GM12878 (cell line): ENCODE measurements at regions of chr3 and their contacts with region 1.

Region 1: DNA sequence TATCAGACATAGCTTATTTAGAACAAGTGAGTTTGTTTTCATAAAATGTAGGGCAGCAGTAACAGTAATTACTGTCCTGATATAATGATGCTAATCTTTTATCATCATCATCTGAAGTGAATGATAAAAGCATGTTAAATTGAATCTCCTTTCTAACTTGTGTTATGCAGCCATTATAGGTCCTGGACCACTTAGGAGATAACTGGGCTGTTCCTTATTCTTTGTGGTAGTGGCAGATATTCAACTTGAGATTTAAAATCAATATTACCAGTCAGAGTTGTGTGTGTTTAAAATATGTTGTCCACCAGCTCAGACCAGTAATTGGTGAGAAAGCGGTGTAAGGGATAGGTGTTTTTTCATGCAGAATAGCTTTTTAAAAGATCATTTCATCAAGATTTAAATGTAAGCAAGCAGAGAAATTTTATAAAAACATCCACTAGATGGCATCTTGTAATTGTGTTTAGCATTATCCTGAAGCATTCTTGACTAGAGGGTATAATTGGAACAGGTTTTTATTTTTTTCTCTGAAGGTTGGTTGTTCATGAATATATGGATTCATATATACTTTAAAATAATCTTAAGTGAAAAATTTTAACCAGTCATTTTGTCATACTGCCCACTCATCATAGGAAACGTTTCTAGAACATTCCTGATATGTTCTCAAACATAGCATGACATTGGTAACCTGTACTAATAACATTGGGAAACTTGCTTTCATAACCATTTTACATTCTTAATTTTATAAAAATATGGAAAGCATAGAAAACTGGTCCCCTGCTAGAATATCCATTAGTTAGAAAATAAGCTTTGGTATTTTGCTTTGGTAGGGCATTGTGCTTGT is 153.9 kb downstream of the BBX start:
- DNase-seq: no peak
- ATAC-seq: peak; percentile 57
- H3K4me3 ChIP-seq: no peak overlapping the region
- H3K27ac ChIP-seq: no peak overlapping the region
- H3K4me1 ChIP-seq: peaks cover 12% of the 10 kb centered on the region
- H3K27me3 ChIP-seq: no peaks in the 10 kb centered on the region
- CTCF ChIP-seq: peak; percentile 24 to 47 (median 39); a peak in 3 of 6 replicates
- EP300 ChIP-seq: no peak
- POLR2A ChIP-seq: no peak
- RAD21 ChIP-seq: peak; percentile 57

Region 2: DNA sequence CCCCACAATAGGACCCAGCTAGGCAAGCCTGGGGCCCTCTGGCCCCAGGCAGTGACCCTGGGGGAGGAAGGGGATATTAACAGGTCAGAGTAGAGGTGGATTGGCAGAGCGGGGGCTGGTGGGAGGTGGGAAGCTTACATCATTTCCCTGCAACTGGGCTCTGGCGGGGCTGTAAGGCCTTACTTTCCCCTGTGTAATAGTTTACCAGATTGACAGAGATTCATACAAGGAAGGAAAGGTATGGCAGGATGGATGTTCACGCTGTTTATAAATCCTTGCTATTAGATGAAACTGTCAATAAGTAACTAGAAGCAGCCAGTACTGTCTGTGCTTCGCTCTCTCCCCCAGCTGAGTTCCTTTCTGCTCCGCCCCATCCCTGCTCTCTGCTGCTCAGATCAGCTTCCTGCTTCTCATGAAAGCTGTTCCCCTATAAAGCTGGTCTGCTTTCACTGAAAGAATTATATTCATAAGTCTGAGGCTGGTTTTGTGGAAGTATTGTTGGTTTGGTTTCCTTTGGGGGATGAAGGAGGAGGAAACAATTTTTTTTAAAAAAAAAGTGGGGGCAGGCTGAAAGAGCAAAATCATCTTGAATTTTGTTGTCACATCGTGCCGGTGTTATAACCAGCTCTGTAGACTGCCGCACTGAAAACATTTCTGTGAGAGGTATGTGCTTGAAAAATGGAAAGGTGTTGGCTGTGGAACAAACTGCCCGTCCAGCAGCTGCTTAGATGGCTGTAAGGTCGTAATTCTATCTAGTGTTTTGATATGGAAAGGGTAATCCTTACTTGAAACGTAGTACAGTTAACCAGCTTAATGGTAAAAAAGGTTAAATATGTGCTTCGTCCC is 77.5 kb before region 1 on chr3:
- CTCF ChIA-PET with region 1: interaction called, 15 read pairs
- POLR2A ChIA-PET with region 1: interaction called, 3 read pairs
- RAD21 ChIA-PET with region 1: interaction called, 18 read pairs
- SMC1A ChIA-PET with region 1: interaction called, 10 read pairs
- in situ Hi-C with region 1: no loop called
- intact Hi-C with region 1: no loop called
- DNase-seq: peak; percentile 59
- ATAC-seq: peak; percentile 92
- H3K4me3 ChIP-seq: peak overlapping the region; percentile 71
- H3K27ac ChIP-seq: peak overlapping the region; percentile 82
- H3K4me1 ChIP-seq: peaks cover 13% of the 10 kb centered on the region
- H3K27me3 ChIP-seq: no peaks in the 10 kb centered on the region
- CTCF ChIP-seq: no peak
- EP300 ChIP-seq: no peak
- POLR2A ChIP-seq: peak; percentile 58; the same call in 1 of the 2 replicates
- RAD21 ChIP-seq: no peak

Region 3: DNA sequence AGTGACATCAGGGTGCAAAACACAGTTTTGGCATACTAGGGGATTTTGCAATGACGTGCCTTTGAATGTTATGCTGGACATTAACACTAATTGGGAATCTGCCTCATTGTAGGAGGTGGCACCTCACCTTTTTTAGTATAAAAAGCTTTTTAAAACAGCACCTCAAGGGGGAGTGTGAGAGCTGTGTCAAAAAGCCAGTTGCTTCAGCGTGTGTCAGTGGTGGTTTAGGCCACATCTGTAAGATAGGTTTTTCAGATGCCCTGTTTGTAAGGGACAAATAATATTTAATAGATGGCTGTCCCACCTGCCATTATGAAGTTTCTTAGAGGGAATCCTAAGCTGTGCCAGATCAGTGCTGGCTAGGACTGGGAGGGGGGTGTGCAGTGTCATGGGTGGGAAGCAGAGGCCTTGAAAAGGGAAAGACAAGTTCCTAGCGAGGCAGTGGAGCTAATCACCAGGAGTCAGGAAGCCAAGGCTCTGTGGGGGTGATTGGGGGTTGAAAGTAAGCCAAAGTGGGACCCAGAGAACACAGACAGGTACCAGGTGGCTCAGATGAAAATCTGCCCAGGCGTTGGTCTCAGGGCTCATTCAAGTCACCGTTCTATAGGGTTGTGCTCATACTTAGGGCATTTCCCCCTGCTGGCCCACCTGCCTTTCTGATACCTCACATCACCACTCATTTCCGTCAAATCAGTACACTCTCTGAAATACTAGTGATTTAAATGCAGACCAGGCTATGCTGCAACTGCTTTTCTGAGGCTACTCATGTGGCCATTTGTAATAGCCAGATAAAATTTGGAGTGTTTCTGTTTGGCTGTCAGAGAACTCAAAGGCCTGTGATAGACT is 33.4 kb before region 1 on chr3:
- CTCF ChIA-PET with region 1: interaction called, 62 read pairs
- POLR2A ChIA-PET with region 1: interaction called, 3 read pairs
- RAD21 ChIA-PET with region 1: interaction called, 40 read pairs
- SMC1A ChIA-PET with region 1: interaction called, 49 read pairs
- in situ Hi-C with region 1: no loop called
- intact Hi-C with region 1: no loop called
- DNase-seq: no peak
- ATAC-seq: peak; percentile 87
- H3K4me3 ChIP-seq: no peak overlapping the region
- H3K27ac ChIP-seq: no peak overlapping the region
- H3K4me1 ChIP-seq: peaks cover 14% of the 10 kb centered on the region
- H3K27me3 ChIP-seq: no peaks in the 10 kb centered on the region
- CTCF ChIP-seq: peak; percentile 34 to 53 (median 48); a peak in 5 of 6 replicates
- EP300 ChIP-seq: no peak
- POLR2A ChIP-seq: no peak
- RAD21 ChIP-seq: peak; percentile 58

Region 4: DNA sequence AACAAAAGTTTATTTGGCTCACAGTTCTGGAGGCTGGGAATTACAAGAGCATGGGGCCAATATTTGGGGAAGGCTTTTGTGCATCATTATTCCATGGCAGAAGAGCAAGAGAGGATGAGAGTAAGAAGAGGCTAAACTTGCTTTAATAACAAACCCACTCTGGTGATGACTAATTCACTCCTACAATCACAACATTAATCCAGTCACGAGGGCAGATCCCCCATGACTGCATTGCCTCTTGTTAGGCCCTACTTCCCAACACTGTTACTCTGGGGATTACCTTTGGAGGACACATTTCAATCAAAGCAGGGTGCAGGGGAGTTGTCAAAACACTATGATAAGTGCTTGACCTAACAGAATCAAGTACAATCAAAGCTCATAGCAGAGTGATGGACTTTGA is 27.8 kb after region 1 on chr3:
- CTCF ChIA-PET with region 1: interaction called, 18 read pairs
- POLR2A ChIA-PET with region 1: no interaction called
- RAD21 ChIA-PET with region 1: interaction called, 3 read pairs
- SMC1A ChIA-PET with region 1: interaction called, 10 read pairs
- in situ Hi-C with region 1: no loop called
- intact Hi-C with region 1: no loop called
- DNase-seq: no peak
- ATAC-seq: no peak
- H3K4me3 ChIP-seq: no peak overlapping the region
- H3K27ac ChIP-seq: no peak overlapping the region
- H3K4me1 ChIP-seq: no peaks in the 10 kb centered on the region
- H3K27me3 ChIP-seq: no peaks in the 10 kb centered on the region
- CTCF ChIP-seq: no peak
- EP300 ChIP-seq: no peak
- POLR2A ChIP-seq: no peak
- RAD21 ChIP-seq: no peak

Region 5: DNA sequence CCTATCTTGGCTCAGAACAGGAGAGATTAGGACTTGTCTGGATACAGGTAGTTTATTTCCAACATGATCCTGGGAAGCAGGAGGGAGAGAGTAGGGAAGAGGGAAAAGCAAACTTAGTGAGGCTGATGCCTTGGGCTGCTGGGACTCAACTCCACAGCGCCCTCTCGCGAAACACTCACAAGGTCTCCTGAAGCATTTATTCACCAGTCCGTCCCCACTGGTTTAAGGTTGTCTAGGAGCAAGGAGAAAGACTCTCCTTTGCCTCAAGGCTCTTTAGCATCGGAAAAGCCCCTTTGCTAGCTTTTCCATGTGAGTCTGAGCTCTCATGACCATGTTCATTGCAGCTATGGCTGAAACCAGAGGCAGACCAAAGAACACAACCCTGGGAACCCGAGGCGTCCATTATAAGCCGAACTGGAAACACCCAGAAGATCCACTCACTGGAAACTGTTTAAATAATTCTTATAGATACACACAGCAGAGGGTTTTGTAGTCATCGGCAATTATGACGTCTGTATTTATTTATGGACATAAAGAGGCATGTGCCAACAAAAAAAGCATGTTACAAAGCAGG is 169.7 kb after region 1 on chr3:
- CTCF ChIA-PET with region 1: interaction called, 56 read pairs
- POLR2A ChIA-PET with region 1: no interaction called
- RAD21 ChIA-PET with region 1: interaction called, 4 read pairs
- SMC1A ChIA-PET with region 1: interaction called, 16 read pairs
- in situ Hi-C with region 1: no loop called
- intact Hi-C with region 1: no loop called
- DNase-seq: no peak
- ATAC-seq: peak; percentile 64
- H3K4me3 ChIP-seq: no peak overlapping the region
- H3K27ac ChIP-seq: no peak overlapping the region
- H3K4me1 ChIP-seq: no peaks in the 10 kb centered on the region; the same call in 1 of the 2 replicates
- H3K27me3 ChIP-seq: no peaks in the 10 kb centered on the region; a peak in 1 of 4 replicates
- CTCF ChIP-seq: peak; percentile 56 to 61 (median 58)
- EP300 ChIP-seq: no peak
- POLR2A ChIP-seq: no peak
- RAD21 ChIP-seq: peak; percentile 54

Region 6: GRCh38 chr3:108477511-108478147 is 800.9 kb after region 1 on chr3:
- CTCF ChIA-PET with region 1: interaction called, 8 read pairs
- POLR2A ChIA-PET with region 1: no interaction called
- RAD21 ChIA-PET with region 1: interaction called, 14 read pairs
- SMC1A ChIA-PET with region 1: no interaction called
- in situ Hi-C with region 1: no loop called
- intact Hi-C with region 1: no loop called
- DNase-seq: peak; percentile 12
- ATAC-seq: peak; percentile 89
- H3K4me3 ChIP-seq: no peak overlapping the region
- H3K27ac ChIP-seq: no peak overlapping the region
- H3K4me1 ChIP-seq: no peaks in the 10 kb centered on the region
- H3K27me3 ChIP-seq: no peaks in the 10 kb centered on the region
- CTCF ChIP-seq: peak; percentile 66 to 70 (median 69)
- EP300 ChIP-seq: no peak
- POLR2A ChIP-seq: no peak
- RAD21 ChIP-seq: peak; percentile 86